CD8-positive, alpha-beta T cell (primary cell): ENCODE measurements at regions of chr7 and their contacts with region 1.

Region 1: DNA sequence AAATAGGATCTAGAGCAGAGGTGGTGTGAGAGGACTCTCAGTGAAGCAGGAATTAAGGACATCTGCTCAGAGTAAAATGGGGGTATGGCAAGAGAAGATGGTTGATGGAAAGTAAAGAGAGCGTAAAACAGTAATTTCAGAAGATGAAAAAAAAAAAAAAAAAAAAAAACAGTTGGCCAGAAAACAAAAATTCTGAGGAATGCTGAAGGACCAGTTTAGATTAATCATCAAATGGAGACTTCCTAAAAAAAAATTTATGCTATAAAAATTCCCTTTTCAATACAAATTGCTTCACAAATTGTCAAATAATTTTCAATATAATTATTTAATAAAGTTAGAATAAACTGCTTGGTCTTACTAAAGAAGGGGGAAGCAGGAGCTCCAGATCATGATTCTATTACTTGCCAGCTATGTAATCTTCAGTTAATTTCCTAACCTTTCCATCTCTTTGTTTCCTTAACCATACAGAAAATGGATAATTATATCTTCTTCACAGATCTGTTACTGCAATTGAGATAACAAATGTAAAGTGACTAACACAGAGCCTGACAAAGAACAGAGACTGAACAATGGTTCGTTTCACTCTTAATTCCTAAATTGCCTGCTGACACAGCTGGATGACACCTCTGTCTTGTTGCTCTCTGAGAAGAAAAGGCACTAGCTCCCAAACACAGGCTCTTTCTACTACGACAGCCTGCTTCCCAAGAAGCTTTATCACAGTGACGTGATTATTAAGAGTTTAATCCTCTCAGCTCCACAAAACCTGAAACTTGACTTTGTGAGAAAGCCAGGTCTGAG is 64.9 kb upstream of the GPR22 start:
- DNase-seq: no peak
- ATAC-seq: no peak
- H3K4me3 ChIP-seq: no peak overlapping the region
- H3K4me3 Mint-ChIP-seq: no peak overlapping the region
- H3K27ac ChIP-seq: no peak overlapping the region
- H3K27ac Mint-ChIP-seq: no peak overlapping the region
- H3K4me1 ChIP-seq: no peaks in the 10 kb centered on the region
- H3K4me1 Mint-ChIP-seq: peaks cover 1% of the 10 kb centered on the region
- H3K27me3 ChIP-seq: no peaks in the 10 kb centered on the region
- H3K27me3 Mint-ChIP-seq: no peaks in the 10 kb centered on the region
- CTCF ChIP-seq: no peak

Region 2: GRCh38 chr7:107372298-107372697 is 32.6 kb before region 1 on chr7:
- CTCF ChIA-PET with region 1: interaction called, 3 read pairs
- POLR2A ChIA-PET with region 1: no interaction called
- intact Hi-C with region 1: loop called in 1 of 2 experiments (anchors 1 kb)
- DNase-seq: no peak
- ATAC-seq: no peak
- H3K4me3 ChIP-seq: no peak overlapping the region
- H3K4me3 Mint-ChIP-seq: no peak overlapping the region
- H3K27ac ChIP-seq: no peak overlapping the region
- H3K27ac Mint-ChIP-seq: no peak overlapping the region
- H3K4me1 ChIP-seq: no peaks in the 10 kb centered on the region
- H3K4me1 Mint-ChIP-seq: no peaks in the 10 kb centered on the region
- H3K27me3 ChIP-seq: no peaks in the 10 kb centered on the region
- H3K27me3 Mint-ChIP-seq: no peaks in the 10 kb centered on the region
- CTCF ChIP-seq: no peak

Region 3: DNA sequence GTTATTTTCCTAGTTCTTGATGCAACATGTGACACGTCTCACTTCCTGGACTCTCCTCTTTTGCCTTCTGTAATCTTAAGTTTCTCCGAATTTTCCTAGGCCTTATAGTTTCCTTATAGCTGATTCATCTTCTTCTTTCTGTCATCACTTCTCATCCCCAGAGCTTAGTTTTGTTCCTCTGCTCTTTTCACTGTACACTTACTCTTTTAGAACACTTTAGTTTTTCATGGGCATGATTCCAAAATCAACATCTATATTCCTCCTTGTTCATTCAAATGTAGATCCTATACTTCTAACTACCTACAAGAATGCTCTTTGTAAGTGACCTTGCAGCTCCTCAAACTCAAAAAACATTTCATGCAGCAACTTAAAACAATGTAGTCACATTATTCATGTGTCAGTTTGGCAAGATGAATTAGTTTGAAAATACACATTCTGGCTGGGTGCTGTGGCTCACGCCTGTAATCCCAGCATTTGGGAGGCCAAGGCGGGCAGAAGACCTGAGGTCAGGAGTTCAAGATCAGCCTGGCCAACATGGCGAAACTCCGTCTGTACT is 411.1 kb after region 1 on chr7:
- CTCF ChIA-PET with region 1: no interaction called
- POLR2A ChIA-PET with region 1: no interaction called
- intact Hi-C with region 1: no loop called
- DNase-seq: no peak
- ATAC-seq: no peak
- H3K4me3 ChIP-seq: no peak overlapping the region
- H3K4me3 Mint-ChIP-seq: no peak overlapping the region
- H3K27ac ChIP-seq: no peak overlapping the region
- H3K27ac Mint-ChIP-seq: no peak overlapping the region
- H3K4me1 ChIP-seq: no peaks in the 10 kb centered on the region
- H3K4me1 Mint-ChIP-seq: no peaks in the 10 kb centered on the region
- H3K27me3 ChIP-seq: no peaks in the 10 kb centered on the region
- H3K27me3 Mint-ChIP-seq: no peaks in the 10 kb centered on the region
- CTCF ChIP-seq: no peak

Region 4: GRCh38 chr7:108299291-108299898 is 894.5 kb after region 1 on chr7:
- CTCF ChIA-PET with region 1: no interaction called
- POLR2A ChIA-PET with region 1: no interaction called
- intact Hi-C with region 1: no loop called
- DNase-seq: no peak
- ATAC-seq: no peak
- H3K4me3 ChIP-seq: no peak overlapping the region
- H3K4me3 Mint-ChIP-seq: no peak overlapping the region
- H3K27ac ChIP-seq: no peak overlapping the region
- H3K27ac Mint-ChIP-seq: no peak overlapping the region
- H3K4me1 ChIP-seq: no peaks in the 10 kb centered on the region
- H3K4me1 Mint-ChIP-seq: peaks cover 2% of the 10 kb centered on the region
- H3K27me3 ChIP-seq: no peaks in the 10 kb centered on the region
- H3K27me3 Mint-ChIP-seq: no peaks in the 10 kb centered on the region
- CTCF ChIP-seq: no peak